OCI-LY7 (cell line): ENCODE measurements at regions of chr11 and their contacts with region 1.

Region 1: GRCh38 chr11:2039198-2039759 is 41.6 kb upstream of the H19 start:
- DNase-seq: no peak
- H3K4me3 ChIP-seq: no peak overlapping the region
- H3K27ac ChIP-seq: no peak overlapping the region
- H3K4me1 ChIP-seq: no peaks in the 10 kb centered on the region
- CTCF ChIP-seq: no peak

Region 2: DNA sequence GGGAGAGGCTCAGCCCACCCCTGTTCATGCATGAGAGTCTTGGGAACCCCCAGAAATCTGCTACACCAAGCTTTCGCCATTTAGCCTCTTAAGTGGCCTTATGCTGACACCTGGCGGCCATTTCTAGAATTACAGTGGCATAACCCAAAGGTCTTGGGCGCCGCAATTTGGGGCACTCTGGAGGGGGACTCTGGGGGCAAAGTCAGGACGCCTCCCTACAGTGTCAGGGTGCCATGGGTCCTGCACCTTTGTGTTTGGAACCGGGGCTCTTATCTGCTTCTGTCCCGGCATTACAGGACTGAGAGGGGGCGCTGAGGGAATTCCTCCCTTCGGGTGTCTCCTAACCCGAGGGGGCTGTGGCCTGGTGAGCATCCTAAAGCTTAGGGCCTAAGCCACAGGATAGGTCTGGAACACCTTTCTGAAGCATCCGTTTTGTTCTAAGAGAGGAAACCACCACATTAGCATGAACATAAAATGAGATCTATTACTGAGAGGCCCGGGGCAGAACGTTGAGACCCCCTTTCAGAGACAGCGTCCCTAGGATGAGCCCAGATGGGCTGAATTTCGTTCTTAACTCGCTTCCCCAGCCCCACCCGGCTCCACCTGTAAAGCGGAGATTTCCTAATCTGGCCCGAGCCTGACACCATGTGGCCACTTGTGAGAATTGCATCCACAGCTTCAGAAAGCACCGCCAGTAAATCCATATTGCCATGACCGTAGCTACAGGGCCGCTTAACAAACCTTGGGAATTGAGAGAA is 112.4 kb after region 1 on chr11:
- CTCF ChIA-PET with region 1: interaction called, 10 read pairs
- POLR2A ChIA-PET with region 1: no interaction called
- intact Hi-C with region 1: no loop called
- DNase-seq: peak; percentile 80
- H3K4me3 ChIP-seq: no peak overlapping the region
- H3K27ac ChIP-seq: no peak overlapping the region
- H3K4me1 ChIP-seq: peaks cover 4% of the 10 kb centered on the region
- CTCF ChIP-seq: peak; percentile 76